ENCODE measurements at regions of chr6 and their contacts with region 1.

Region 1: GRCh38 chr6:13614926-13615798 is at the start of gene NOL7:
- DNase-seq: peak; percentile 98
- H3K4me3 ChIP-seq: peak within 1 kb of the TSS; percentile 61 to 91 (median 71)
- H3K27ac ChIP-seq: peak within 1 kb of the TSS; percentile 91 to 95 (median 94)
- H3K4me1 ChIP-seq: peaks cover 0 to 25% (median 17%) of the 10 kb centered on the region in 4 donors
- H3K27me3 ChIP-seq: no peaks in the 10 kb centered on the region
- CTCF ChIP-seq: peak; percentile 69 to 98 (median 91)
- EP300 ChIP-seq: no peak
- POLR2A ChIP-seq: peak; percentile 93
- total RNA-seq, gene NOL7: 44.1 to 159 (median 86.6) TPM

Region 2: GRCh38 chr6:13375360-13375878 is 239.7 kb before region 1 on chr6:
- in situ Hi-C with region 1: no loop called
- intact Hi-C with region 1: no loop called
- DNase-seq: no peak
- H3K4me3 ChIP-seq: no peak overlapping the region
- H3K27ac ChIP-seq: no peak overlapping the region
- H3K4me1 ChIP-seq: peaks cover 2 to 25% (median 22%) of the 10 kb centered on the region in 4 donors
- H3K27me3 ChIP-seq: no peaks in the 10 kb centered on the region
- CTCF ChIP-seq: no peak
- EP300 ChIP-seq: no peak
- POLR2A ChIP-seq: no peak

Region 3: GRCh38 chr6:13711733-13712598 is 96.8 kb after region 1 on chr6 and contains the start of gene RANBP9:
- in situ Hi-C with region 1: no loop called
- intact Hi-C with region 1: loop called (anchors 2 kb)
- DNase-seq: peak; percentile 90
- H3K4me3 ChIP-seq: peak within 1 kb of the TSS; percentile 63 to 94 (median 84)
- H3K27ac ChIP-seq: peak within 1 kb of the TSS; percentile 96 to 98 (median 98)
- H3K4me1 ChIP-seq: peaks cover 21 to 38% (median 26%) of the 10 kb centered on the region in 4 donors
- H3K27me3 ChIP-seq: no peaks in the 10 kb centered on the region
- CTCF ChIP-seq: no peak
- EP300 ChIP-seq: peak; percentile 12
- POLR2A ChIP-seq: peak; percentile 67
- total RNA-seq, gene RANBP9: 17.9 to 40.8 (median 37.4) TPM

Region 4: DNA sequence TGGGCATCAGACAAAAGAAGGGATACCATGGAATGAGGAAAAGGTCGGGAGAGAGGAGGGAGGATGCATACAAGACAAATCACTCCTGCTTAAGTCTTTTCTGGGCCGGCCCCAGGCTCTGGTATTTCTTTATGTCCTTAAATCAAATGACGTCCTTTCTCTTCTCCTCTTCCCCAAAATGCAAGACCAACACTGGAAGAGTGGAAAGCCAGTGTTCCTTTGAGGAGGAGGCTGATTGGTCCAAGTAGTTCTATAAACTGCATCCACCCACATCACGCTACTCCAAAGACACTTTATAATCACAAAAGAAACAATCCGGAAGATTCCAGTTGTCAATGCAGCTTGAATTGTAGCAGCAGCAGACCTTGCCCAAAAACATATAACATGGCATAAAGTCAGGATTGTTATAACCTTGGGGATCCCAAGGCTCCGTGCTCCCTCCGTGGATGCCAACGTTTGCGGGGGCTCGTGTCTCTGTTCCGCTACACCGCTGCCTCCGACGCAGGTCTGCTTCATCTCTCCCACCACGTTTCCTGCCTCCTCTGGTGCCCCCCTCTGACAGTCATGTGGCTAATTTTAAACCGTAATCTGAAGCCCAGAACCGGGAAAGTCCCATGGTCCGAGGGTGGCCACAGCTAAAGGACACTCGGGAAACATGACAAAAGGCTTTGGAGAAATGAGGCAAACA is 152.1 kb after region 1 on chr6:
- in situ Hi-C with region 1: no loop called
- intact Hi-C with region 1: loop called (anchors 10 kb)
- DNase-seq: peak; percentile 53
- H3K4me3 ChIP-seq: peak overlapping the region in 2 of 4 donors; percentile 22 to 31
- H3K27ac ChIP-seq: peak overlapping the region in 3 of 4 donors; percentile 40 to 70 (median 67)
- H3K4me1 ChIP-seq: peaks cover 0 to 23% (median 13%) of the 10 kb centered on the region in 4 donors
- H3K27me3 ChIP-seq: no peaks in the 10 kb centered on the region
- CTCF ChIP-seq: peak in 1 of 5 experiments; percentile 11
- EP300 ChIP-seq: no peak
- POLR2A ChIP-seq: no peak